Mucosa of descending colon (tissue), 3 donors: ENCODE measurements at regions of chr4 and their contacts with region 1.

Region 1: DNA sequence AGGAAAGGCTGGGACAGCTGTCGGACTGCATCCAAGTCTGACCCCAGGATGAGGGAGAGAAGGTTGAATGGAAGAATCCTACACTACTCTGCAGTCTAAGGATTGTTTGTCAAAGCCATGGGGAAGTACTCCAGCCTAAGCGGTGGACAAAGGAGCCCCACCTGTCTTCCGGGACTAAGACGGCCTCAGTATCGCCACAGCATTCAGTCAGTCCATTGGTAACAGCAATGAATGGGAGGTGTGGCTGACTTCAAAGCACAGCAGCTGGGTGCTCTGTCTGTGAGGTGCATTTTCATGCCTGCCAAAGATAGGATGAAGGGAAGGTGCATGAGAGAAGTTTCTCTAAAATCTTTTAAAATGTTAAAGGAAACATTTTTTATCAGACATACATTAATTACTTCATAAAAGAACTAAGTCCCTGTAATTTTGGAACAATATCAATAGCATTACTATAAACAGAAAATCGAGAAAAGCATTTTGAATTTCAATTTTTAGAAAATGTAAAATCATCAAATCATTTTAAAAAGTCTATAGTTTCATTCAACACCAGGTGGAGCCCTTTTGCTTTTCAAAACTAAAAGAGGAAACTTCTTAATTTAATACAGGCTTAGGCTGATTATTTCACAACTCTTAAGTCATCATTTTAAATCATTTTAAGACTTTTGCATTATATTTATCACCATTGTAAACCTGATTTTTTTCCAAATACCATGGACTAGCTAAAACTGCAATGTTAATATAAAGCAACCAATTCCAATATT is 27.6 kb upstream of the INTU start:
- DNase-seq: peak in 1 of 3 donors; percentile 12
- ATAC-seq: peak; percentile 77
- H3K4me3 ChIP-seq: no peak overlapping the region
- H3K4me1 ChIP-seq: no peaks in the 10 kb centered on the region
- CTCF ChIP-seq: no peak

Region 2: DNA sequence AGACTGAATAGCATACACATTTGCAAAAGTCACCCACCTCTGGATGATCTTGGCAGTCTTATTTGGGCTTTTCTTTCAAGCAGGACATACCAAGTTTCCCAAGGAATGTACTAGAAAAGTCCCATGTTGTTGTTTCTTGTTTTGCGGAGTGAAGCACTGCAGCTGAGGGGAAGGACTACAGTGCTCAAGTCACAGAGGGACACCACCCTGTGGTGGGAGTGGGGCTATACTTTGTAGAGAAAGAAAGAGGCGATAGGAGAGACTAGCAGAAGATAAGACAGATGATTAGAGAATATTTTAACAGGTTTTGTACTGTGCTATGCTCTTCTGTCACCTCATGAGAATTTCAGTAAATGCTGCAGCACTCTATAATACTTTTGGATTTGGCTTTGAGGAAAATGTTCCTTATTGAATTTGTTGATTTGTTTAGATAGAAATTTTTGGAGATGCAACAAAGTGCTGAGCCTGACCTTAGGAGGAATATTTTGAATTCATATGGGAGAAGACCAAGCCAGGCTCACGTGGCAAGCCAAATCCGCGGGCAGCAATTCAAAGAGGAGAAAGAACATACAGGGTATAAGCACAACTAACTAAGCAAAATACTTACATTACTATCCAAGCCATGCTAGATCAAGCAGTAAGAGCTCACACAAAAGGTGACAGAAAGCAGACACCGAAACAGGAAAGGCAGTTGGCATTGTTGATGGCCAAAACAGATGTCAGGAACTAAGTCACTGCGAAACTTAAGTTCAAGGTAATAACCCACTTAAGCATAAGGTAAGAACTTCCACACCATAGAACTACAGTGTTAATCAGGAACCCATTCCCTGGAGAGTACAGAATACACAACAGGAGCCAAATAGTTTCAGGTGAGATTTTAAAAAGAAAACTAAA is 252.7 kb before region 1 on chr4:
- intact Hi-C with region 1: no loop called
- DNase-seq: no peak
- ATAC-seq: no peak
- H3K4me3 ChIP-seq: no peak overlapping the region
- H3K4me1 ChIP-seq: no peaks in the 10 kb centered on the region
- CTCF ChIP-seq: no peak

Region 3: GRCh38 chr4:127732613-127733328 is 127.6 kb after region 1 on chr4:
- intact Hi-C with region 1: loop called (anchors 5 to 10 kb)
- DNase-seq: peak in 1 of 3 donors; percentile 13
- ATAC-seq: peak; percentile 23
- H3K4me3 ChIP-seq: no peak overlapping the region
- H3K4me1 ChIP-seq: no peaks in the 10 kb centered on the region
- CTCF ChIP-seq: no peak